Psoas muscle (tissue), 8 donors: ENCODE measurements at regions of chr12 and their contacts with region 1.

Region 1: GRCh38 chr12:89051065-89051677 is 301.1 kb downstream of the DUSP6 start:
- DNase-seq: no peak
- ATAC-seq: peak; percentile 51 to 82 (median 60)
- H3K4me3 ChIP-seq: no peak overlapping the region
- H3K27ac ChIP-seq: no peak overlapping the region
- H3K4me1 ChIP-seq: no peaks in the 10 kb centered on the region
- H3K27me3 ChIP-seq: no peaks in the 10 kb centered on the region
- CTCF ChIP-seq: peak; percentile 91

Region 2: GRCh38 chr12:89098441-89099112 is 47.4 kb after region 1 on chr12:
- intact Hi-C with region 1: no loop called
- DNase-seq: no peak
- ATAC-seq: no peak
- H3K4me3 ChIP-seq: no peak overlapping the region
- H3K27ac ChIP-seq: no peak overlapping the region
- H3K4me1 ChIP-seq: no peaks in the 10 kb centered on the region
- H3K27me3 ChIP-seq: no peaks in the 10 kb centered on the region
- CTCF ChIP-seq: no peak

Region 3: GRCh38 chr12:89352492-89353187 is 301.5 kb after region 1 on chr12 and contains the start of gene DUSP6:
- intact Hi-C with region 1: loop called in 1 of 2 experiments (anchors 5 kb)
- DNase-seq: peak; percentile 90 to 93
- ATAC-seq: peak; percentile 58 to 73 (median 64)
- H3K4me3 ChIP-seq: peak within 1 kb of the TSS; percentile 77
- H3K27ac ChIP-seq: peak within 1 kb of the TSS; percentile 85
- H3K4me1 ChIP-seq: peaks cover 15% of the 10 kb centered on the region
- H3K27me3 ChIP-seq: peaks cover 0 to 95% (median 30%) of the 10 kb centered on the region in 3 donors
- CTCF ChIP-seq: no peak
- total RNA-seq, gene DUSP6: 10.5 to 27.0 (median 13.3) TPM